PC-9 (cell line): ENCODE measurements at regions of chr3 and their contacts with region 1.

Region 1: DNA sequence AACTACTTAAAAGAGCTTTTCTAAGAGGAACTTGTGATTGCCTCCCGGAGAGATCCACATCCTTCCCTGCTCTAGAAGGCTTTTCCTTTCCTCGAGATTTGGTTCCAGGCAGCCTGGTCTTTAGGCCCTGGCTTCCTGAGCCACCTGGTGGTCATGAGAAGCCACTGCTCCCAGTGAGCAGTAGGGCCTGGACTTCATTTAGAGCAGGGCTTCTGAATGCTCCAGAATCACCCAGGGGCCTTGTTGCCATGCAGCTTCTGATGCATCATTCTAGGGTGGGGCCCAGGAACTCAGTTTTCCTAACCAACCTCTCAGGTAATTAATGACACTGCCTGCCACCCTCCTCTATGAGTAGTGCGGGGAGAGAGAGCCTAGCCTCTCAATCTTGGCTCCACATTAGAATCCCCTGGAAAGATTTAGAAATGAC is 29.6 kb downstream of the PSMD6 start:
- DNase-seq: peak; percentile 40 to 54
- H3K4me3 ChIP-seq: no peak overlapping the region
- H3K27ac ChIP-seq: no peak overlapping the region
- H3K4me1 ChIP-seq: no peaks in the 10 kb centered on the region
- H3K27me3 ChIP-seq: no peaks in the 10 kb centered on the region
- CTCF ChIP-seq: peak; percentile 82

Region 2: DNA sequence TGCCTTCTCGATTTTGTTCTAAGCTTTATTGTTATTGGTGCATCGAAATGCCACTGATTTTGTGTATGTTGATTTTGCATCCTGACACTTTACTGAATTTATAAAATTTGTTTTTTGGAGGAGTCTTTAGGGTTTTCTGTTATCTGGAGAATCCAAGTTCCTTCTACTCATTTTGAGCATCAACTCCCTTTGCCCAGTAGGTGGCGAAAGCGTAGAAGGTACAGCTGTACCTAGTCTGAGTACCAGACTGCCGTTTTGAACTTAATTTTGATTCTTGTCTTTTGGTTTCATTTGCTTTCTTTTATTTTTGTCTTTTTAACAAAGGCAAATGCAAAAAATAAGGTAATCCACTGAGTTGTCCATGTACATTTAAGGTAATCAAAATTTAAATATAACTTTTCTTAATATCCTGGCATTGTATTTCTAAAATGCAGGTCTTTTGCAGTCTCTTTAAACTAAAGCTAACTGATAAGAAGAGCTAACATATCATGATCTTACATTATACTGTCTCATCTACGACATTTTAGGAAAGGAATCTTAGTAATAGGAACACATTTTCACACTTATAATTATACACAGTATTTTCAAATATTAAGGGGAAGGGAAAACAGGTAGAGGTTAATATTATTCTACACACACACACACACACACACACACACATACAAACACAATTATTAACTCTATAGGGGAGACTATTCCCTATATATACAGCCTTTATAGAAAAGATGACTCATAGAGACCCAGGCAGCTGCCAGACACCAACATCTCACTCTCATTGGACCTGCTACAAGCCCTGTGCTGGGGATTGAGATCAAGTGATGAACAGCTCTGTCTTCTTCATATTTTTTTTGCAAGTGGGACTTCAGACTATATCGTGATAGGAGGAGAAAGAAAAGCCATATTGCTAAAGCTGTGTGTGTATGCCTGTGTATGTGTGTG is 643.8 kb before region 1 on chr3:
- CTCF ChIA-PET with region 1: no interaction called
- POLR2A ChIA-PET with region 1: no interaction called
- intact Hi-C with region 1: loop called (anchors 1 kb)
- DNase-seq: peak; percentile 20 to 38
- H3K4me3 ChIP-seq: no peak overlapping the region
- H3K27ac ChIP-seq: no peak overlapping the region
- H3K4me1 ChIP-seq: no peaks in the 10 kb centered on the region
- H3K27me3 ChIP-seq: peaks cover 6% of the 10 kb centered on the region; the same call in 1 of the 2 replicates
- CTCF ChIP-seq: peak; percentile 72

Region 3: DNA sequence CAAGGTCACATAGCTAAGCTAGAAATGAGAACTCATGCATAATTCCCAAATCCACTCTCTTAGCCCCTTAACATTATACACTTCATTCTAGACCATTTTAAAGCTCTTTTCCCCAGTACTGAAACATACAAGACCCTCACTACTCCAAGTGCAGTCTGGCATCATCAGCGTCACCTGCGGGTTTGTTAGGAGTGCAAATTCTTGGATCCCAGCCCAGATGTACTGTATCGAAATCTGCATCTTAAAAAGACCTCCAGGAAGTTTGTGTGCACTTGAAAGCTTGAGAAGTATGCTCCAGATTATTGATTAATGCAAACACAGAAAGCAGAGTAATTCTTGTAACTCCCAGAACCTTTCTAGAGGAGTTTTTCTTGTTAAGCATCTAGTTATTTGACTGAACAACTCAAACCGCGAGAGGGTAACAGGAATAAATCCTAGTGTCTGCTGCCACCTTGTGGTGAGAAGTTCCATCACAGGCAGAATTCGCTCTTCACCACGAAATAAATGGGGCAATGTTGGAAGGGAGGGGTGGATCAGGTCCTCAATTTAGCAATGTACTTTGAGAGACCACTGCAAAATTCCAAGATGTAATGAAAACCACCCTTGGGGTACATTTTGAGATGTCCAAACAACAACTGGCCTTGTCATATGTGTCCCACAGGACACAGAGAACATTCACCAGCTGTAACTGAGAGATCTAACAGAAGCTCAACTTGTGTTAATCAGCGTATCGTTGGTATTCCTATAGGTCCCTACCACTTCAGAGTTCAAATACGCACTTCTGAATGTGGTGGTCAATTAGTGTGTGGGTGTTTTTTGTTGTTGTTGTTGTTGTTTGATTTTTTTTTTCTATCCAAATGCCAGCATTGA is 175.2 kb before region 1 on chr3:
- CTCF ChIA-PET with region 1: no interaction called
- POLR2A ChIA-PET with region 1: no interaction called
- intact Hi-C with region 1: loop called (anchors 5 kb)
- DNase-seq: peak in 1 of 2 experiments; percentile 40
- H3K4me3 ChIP-seq: no peak overlapping the region
- H3K27ac ChIP-seq: no peak overlapping the region
- H3K4me1 ChIP-seq: no peaks in the 10 kb centered on the region
- H3K27me3 ChIP-seq: no peaks in the 10 kb centered on the region
- CTCF ChIP-seq: peak; percentile 81

Region 4: GRCh38 chr3:63961891-63962290 is 31.8 kb before region 1 on chr3:
- CTCF ChIA-PET with region 1: no interaction called
- POLR2A ChIA-PET with region 1: interaction called, 3 read pairs
- intact Hi-C with region 1: loop called (anchors 2 kb)
- DNase-seq: peak in 1 of 2 experiments; percentile 65
- H3K4me3 ChIP-seq: no peak overlapping the region
- H3K27ac ChIP-seq: no peak overlapping the region
- H3K4me1 ChIP-seq: peaks cover 13% of the 10 kb centered on the region
- H3K27me3 ChIP-seq: no peaks in the 10 kb centered on the region
- CTCF ChIP-seq: peak; percentile 74

Region 5: GRCh38 chr3:63975723-63976122 is 17.9 kb before region 1 on chr3:
- CTCF ChIA-PET with region 1: interaction called, 10 read pairs
- POLR2A ChIA-PET with region 1: no interaction called
- intact Hi-C with region 1: no loop called
- DNase-seq: no peak
- H3K4me3 ChIP-seq: no peak overlapping the region
- H3K27ac ChIP-seq: no peak overlapping the region
- H3K4me1 ChIP-seq: peaks cover 16% of the 10 kb centered on the region
- H3K27me3 ChIP-seq: no peaks in the 10 kb centered on the region
- CTCF ChIP-seq: no peak